ENCODE measurements at regions of chr7 and their contacts with region 1.

Region 1: DNA sequence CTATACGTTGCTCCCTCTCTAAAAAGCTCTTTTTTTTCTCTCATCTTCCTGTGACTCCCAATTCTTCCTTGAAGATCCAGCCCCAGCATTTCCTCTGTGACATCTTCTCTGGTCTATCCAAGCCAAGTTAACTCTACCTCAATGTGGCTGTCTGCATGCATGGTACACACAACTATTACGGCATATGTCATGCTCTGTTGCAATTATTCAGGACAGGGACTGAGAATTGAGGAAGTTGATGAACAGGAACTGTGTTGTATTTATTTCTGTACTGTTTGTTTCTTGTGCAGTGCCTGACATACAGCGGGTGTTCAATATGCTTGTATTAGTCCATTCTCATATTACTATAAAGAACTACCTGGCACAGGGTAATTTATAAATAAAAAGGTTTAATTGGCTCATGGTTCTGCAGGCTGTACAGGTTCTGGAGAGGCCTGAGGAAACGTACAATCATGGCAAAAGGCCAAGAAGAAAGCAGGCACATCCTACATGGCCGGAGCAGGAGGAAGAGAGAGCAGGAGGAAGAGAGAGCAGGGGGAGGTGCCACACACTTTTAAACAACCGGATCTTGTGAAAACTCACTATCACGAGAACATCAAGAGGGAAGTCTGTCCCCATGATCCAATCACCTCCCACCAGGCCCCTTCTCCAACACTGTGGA is 6.3 kb downstream of the TRPV5 start:
- DNase-seq: no peak
- H3K4me3 ChIP-seq: no peak overlapping the region
- H3K27ac ChIP-seq: no peak overlapping the region
- H3K4me1 ChIP-seq: no peaks in the 10 kb centered on the region; a peak in 1 of 7 replicates
- H3K27me3 ChIP-seq: peaks cover 0 to 8% (median 0%) of the 10 kb centered on the region in 4 experiments; a peak in 4 of 7 replicates
- CTCF ChIP-seq: no peak
- EP300 ChIP-seq: no peak
- POLR2A ChIP-seq: no peak
- RAD21 ChIP-seq: no peak

Region 2: GRCh38 chr7:142908921-142909890 is 18.0 kb before region 1 on chr7:
- CTCF ChIA-PET with region 1: interaction called, 31 read pairs
- POLR2A ChIA-PET with region 1: interaction called, 5 read pairs
- DNase-seq: no peak
- H3K4me3 ChIP-seq: no peak overlapping the region
- H3K27ac ChIP-seq: no peak overlapping the region
- H3K4me1 ChIP-seq: no peaks in the 10 kb centered on the region
- H3K27me3 ChIP-seq: no peaks in the 10 kb centered on the region
- CTCF ChIP-seq: peak; percentile 41 to 72 (median 53)
- EP300 ChIP-seq: no peak
- POLR2A ChIP-seq: no peak
- RAD21 ChIP-seq: peak; percentile 43 to 55

Region 3: GRCh38 chr7:142916508-142916907 is 10.7 kb before region 1 on chr7:
- CTCF ChIA-PET with region 1: interaction called, 31 read pairs
- POLR2A ChIA-PET with region 1: interaction called, 3 read pairs
- DNase-seq: no peak
- H3K4me3 ChIP-seq: no peak overlapping the region
- H3K27ac ChIP-seq: no peak overlapping the region
- H3K4me1 ChIP-seq: no peaks in the 10 kb centered on the region
- H3K27me3 ChIP-seq: no peaks in the 10 kb centered on the region
- CTCF ChIP-seq: no peak
- EP300 ChIP-seq: no peak
- POLR2A ChIP-seq: no peak
- RAD21 ChIP-seq: no peak

Region 4: DNA sequence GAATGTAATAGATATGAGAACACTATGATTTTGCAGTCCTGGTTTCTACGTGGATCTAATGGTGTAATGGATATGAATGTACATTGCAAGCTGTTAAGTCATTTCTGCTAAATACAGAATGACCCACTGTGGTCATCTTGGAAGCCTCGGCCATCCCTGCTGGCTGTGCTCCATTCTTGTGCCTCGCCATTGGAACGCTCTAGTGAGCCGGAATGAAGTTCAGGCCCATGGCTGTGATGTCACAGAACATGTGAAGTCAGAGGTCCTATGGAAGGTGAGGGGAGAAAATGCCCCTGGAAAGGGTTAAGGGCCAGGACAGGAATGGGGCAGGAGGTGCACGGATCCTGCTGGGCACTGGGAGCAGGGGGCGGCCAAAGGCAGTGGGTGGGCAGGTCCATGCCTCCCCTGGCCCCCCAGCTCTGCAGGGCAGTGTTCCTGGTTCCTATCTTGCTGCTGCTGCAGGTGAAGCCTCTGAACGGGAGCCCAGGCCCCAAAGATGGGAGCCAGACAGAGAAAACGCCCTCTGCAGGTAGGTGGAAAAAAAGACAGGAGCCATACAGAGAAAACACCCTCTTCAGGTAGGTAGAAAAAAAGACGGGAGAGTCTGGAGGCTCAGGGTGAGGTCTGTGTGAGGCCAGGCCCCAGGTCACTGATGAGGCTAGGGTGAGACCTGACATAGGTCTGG is 12.2 kb after region 1 on chr7 and contains the start of gene LLCFC1:
- CTCF ChIA-PET with region 1: interaction called, 36 read pairs
- POLR2A ChIA-PET with region 1: interaction called, 3 read pairs
- DNase-seq: peak; percentile 19 to 71
- H3K4me3 ChIP-seq: no peak within 1 kb of the TSS
- H3K27ac ChIP-seq: no peak within 1 kb of the TSS
- H3K4me1 ChIP-seq: no peaks in the 10 kb centered on the region
- H3K27me3 ChIP-seq: no peaks in the 10 kb centered on the region; a peak in 1 of 7 replicates
- CTCF ChIP-seq: peak; percentile 55 to 97 (median 85)
- EP300 ChIP-seq: no peak
- POLR2A ChIP-seq: no peak
- RAD21 ChIP-seq: peak; percentile 55 to 71
- total RNA-seq, gene LLCFC1: not detected in 2 replicates

Region 5: DNA sequence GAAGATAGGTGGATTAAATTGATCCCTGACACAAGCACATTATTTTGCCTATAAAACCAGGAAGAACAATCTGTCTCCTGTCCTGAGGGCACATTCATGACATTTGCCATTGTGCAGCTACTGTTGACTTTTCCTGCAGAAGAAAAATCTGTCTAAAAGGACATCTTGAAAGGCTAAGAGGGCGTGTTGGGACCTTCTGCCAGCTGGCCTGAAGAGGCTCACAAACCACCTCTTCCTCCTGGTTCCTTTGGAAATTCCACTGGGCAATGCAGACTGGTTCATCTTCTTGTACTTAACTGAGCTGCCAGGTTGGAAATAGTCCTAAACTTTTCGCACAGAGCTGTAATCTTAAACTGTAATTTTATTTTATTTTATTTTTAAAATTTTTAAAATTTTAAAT is 168.9 kb after region 1 on chr7:
- CTCF ChIA-PET with region 1: no interaction called
- POLR2A ChIA-PET with region 1: no interaction called
- DNase-seq: no peak
- H3K4me3 ChIP-seq: no peak overlapping the region
- H3K27ac ChIP-seq: no peak overlapping the region
- H3K4me1 ChIP-seq: no peaks in the 10 kb centered on the region
- H3K27me3 ChIP-seq: no peaks in the 10 kb centered on the region
- CTCF ChIP-seq: no peak
- EP300 ChIP-seq: no peak
- POLR2A ChIP-seq: no peak
- RAD21 ChIP-seq: no peak